ENCODE measurements at regions of chr7 and their contacts with region 1.

Region 1: DNA sequence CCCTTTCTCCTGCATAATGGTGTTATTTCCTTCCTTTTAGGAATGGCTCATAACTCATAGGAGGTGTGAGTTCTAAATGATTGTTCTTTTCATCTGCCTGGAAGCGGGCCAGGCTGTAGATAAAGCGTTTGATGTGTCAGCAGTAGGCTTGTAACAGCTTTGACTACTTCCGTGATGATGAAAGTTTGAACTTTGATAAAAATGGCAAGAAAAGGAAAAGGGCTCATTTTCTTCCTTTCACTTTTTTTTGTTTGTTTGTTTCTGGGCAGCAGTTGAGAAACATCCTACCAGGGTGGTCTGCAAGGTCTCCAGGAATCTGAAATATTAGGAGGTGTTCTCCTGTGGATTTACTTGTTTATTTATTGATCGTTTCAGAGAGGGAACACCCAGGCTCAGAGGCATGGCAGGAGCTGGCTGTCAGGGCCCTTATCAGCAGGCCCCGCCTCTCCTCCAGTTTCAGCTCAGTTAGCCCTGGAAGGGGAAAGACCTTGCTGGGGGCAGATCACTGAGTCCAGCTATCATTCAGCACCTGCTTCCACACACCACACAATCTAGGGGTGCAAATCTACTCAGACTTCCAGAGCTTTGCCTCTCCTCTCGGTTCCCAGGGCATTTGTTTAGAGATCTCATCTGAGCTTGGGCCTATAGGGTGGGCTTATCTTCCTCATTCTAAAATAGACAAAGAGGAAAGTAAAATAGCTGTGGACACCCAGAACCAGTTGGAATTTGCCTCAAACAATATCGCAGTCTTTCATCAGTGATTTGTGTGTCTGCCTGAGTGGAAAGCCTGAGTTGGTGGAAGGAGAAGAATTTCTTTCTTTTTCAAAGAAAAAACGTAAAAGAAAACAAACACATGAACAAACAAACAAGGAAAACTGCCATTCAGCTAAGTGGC is 131.0 kb downstream of the BMPER start:
- DNase-seq: peak; percentile 94
- H3K4me3 ChIP-seq: no peak overlapping the region
- H3K27ac ChIP-seq: peak overlapping the region; percentile 58
- H3K4me1 ChIP-seq: peaks cover 18% of the 10 kb centered on the region
- H3K27me3 ChIP-seq: no peaks in the 10 kb centered on the region
- CTCF ChIP-seq: no peak
- POLR2A ChIP-seq: no peak

Region 2: DNA sequence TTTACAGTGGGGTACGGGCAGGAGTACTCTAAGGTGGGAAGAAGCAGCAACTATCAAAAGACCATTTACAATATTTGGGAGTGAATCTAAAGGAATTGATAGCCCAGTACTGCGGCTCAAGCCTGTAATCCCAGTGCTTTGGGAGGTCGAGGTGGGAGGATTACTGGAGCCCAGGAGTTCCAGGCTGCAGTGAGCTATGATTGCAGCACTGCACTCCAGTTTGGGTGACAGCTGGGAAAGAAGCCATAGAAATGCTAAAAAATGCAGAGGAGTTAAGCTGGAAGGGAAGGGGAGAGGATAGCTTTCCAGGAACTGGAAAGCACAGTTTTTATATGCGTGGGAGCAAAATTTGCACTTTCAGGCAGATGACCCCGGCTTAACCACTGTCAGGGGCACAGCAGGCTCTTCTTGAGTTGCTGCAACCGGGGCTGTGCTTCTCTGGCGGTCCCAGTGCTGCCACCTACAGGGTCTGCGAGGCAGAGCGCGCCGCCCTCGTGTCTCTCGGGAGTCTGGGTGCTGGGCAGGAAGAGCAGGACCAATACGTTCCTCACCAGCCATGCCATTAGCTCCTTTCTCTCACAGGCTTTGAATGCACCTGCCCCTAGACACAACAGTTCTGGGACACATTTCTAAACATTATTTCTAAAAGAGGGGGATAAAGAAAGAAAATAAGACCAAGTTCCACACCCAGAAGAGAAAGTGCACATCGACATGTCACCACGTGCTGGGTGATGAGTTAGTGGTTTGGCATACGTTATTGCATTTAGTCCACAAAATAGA is 141.1 kb before region 1 on chr7:
- CTCF ChIA-PET with region 1: no interaction called
- POLR2A ChIA-PET with region 1: no interaction called
- dilution Hi-C with region 1: no loop called
- intact Hi-C with region 1: no loop called
- DNase-seq: peak; percentile 82
- H3K4me3 ChIP-seq: no peak overlapping the region
- H3K27ac ChIP-seq: no peak overlapping the region
- H3K4me1 ChIP-seq: no peaks in the 10 kb centered on the region
- H3K27me3 ChIP-seq: no peaks in the 10 kb centered on the region
- CTCF ChIP-seq: peak; percentile 86 to 98
- POLR2A ChIP-seq: no peak

Region 3: GRCh38 chr7:34011696-34012095 is 24.6 kb before region 1 on chr7:
- CTCF ChIA-PET with region 1: interaction called, 4 read pairs
- POLR2A ChIA-PET with region 1: no interaction called
- dilution Hi-C with region 1: no loop called
- intact Hi-C with region 1: loop called (anchors 1 kb)
- DNase-seq: no peak
- H3K4me3 ChIP-seq: no peak overlapping the region
- H3K27ac ChIP-seq: no peak overlapping the region
- H3K4me1 ChIP-seq: peaks cover 8% of the 10 kb centered on the region
- H3K27me3 ChIP-seq: no peaks in the 10 kb centered on the region
- CTCF ChIP-seq: no peak
- POLR2A ChIP-seq: no peak

Region 4: DNA sequence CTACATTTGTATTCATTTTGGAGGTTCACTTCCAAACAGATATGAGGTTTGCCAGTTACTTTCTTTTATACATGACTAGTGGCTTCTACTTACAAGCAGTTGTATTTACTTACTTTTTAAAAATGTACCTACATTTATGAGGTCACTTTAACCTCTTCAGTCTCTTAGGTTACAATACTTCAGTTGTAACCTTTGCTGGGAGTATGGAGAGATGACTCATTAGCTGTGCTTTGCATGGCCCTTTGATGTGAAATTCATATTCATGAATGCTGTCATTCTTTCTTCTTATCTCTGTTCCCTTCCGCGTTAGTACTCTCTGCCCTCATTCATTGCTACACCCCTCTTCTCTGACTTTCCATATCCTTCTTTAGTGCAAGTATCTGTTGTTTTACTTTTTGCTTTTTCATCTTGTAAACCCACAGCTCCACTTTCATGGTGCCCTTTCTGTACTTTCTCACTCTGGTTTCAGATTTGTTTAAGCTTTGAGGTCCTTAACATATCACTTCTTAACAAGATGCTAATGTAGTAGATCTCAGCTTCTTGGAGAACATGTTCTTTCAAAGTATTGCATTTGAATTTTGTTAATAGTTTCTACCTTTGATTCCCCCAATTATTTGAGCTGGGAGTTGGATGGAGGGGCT is 33.5 kb after region 1 on chr7:
- CTCF ChIA-PET with region 1: no interaction called
- POLR2A ChIA-PET with region 1: no interaction called
- dilution Hi-C with region 1: no loop called
- intact Hi-C with region 1: loop called (anchors 1 kb)
- DNase-seq: peak; percentile 62
- H3K4me3 ChIP-seq: no peak overlapping the region
- H3K27ac ChIP-seq: peak overlapping the region; percentile 41
- H3K4me1 ChIP-seq: peaks cover 22% of the 10 kb centered on the region
- H3K27me3 ChIP-seq: no peaks in the 10 kb centered on the region
- CTCF ChIP-seq: no peak
- POLR2A ChIP-seq: no peak